Activated B cell treated with CpG ODN at 0.5 μM for 24 hours (primary cell): ENCODE measurements at regions of chr9 and their contacts with region 1.

Region 1: DNA sequence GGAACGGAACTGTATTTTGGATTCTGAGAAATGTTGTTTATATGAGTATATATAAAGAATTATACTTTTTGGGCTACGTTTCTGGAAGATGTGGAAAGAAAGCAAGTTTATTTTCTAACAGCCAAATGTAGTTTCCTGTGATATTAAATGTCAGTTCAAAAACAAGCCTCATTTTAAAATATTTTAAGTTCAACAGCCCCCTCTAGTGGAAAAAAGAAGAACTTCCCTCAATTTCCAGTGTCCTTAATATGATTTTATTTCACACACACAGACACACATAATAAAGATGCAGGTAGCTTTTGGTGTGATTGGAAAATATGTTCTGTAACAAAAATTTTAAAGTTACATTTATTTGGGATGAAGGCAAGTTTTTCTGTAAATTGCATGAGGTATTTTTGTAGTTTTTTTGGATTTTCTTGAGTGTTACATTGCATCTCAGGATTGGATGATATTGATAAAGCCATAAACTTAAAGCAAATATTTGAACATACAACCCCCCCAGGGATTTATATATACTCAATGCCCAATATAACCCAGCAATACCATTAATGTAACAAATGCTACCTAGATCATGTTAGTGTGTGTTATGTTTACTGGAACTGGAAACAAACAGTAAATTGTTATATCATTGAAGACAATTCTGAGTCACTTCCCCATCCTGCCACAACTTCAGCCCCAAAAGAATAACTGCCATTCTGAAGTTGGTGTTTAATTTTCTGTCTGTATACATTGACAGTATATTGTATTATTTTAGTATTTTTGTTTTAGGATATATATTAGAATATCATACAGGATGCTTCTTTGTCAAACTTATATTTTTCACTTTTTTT is 54.0 kb downstream of the CCDC171 start:
- DNase-seq: no peak
- ATAC-seq: no peak
- H3K4me3 Mint-ChIP-seq: no peak overlapping the region
- H3K27ac Mint-ChIP-seq: no peak overlapping the region
- H3K4me1 Mint-ChIP-seq: no peaks in the 10 kb centered on the region
- H3K27me3 Mint-ChIP-seq: no peaks in the 10 kb centered on the region
- CTCF ChIP-seq: peak; percentile 66

Region 2: GRCh38 chr9:15104826-15105420 is 501.9 kb before region 1 on chr9:
- CTCF ChIA-PET with region 1: interaction called, 3 read pairs
- POLR2A ChIA-PET with region 1: no interaction called
- intact Hi-C with region 1: loop called (anchors 2 kb)
- DNase-seq: no peak
- ATAC-seq: no peak
- H3K4me3 Mint-ChIP-seq: no peak overlapping the region
- H3K27ac Mint-ChIP-seq: no peak overlapping the region
- H3K4me1 Mint-ChIP-seq: no peaks in the 10 kb centered on the region
- H3K27me3 Mint-ChIP-seq: peaks cover 9% of the 10 kb centered on the region
- CTCF ChIP-seq: no peak

Region 3: GRCh38 chr9:15180124-15180523 is 426.7 kb before region 1 on chr9:
- CTCF ChIA-PET with region 1: no interaction called
- POLR2A ChIA-PET with region 1: no interaction called
- intact Hi-C with region 1: no loop called
- DNase-seq: no peak
- ATAC-seq: no peak
- H3K4me3 Mint-ChIP-seq: no peak overlapping the region
- H3K27ac Mint-ChIP-seq: no peak overlapping the region
- H3K4me1 Mint-ChIP-seq: peaks cover 7% of the 10 kb centered on the region
- H3K27me3 Mint-ChIP-seq: no peaks in the 10 kb centered on the region
- CTCF ChIP-seq: no peak

Region 4: GRCh38 chr9:15277400-15278090 is 329.3 kb before region 1 on chr9:
- CTCF ChIA-PET with region 1: interaction called, 7 read pairs
- POLR2A ChIA-PET with region 1: no interaction called
- intact Hi-C with region 1: loop called (anchors 1 kb)
- DNase-seq: no peak
- ATAC-seq: peak; percentile 60
- H3K4me3 Mint-ChIP-seq: no peak overlapping the region
- H3K27ac Mint-ChIP-seq: no peak overlapping the region
- H3K4me1 Mint-ChIP-seq: peaks cover 4% of the 10 kb centered on the region
- H3K27me3 Mint-ChIP-seq: no peaks in the 10 kb centered on the region
- CTCF ChIP-seq: no peak

Region 5: GRCh38 chr9:15317836-15318235 is 289.0 kb before region 1 on chr9:
- CTCF ChIA-PET with region 1: no interaction called
- POLR2A ChIA-PET with region 1: no interaction called
- intact Hi-C with region 1: no loop called
- DNase-seq: no peak
- ATAC-seq: no peak
- H3K4me3 Mint-ChIP-seq: no peak overlapping the region
- H3K27ac Mint-ChIP-seq: no peak overlapping the region
- H3K4me1 Mint-ChIP-seq: no peaks in the 10 kb centered on the region
- H3K27me3 Mint-ChIP-seq: no peaks in the 10 kb centered on the region
- CTCF ChIP-seq: no peak

Region 6: GRCh38 chr9:15485836-15486666 is 120.8 kb before region 1 on chr9:
- CTCF ChIA-PET with region 1: no interaction called
- POLR2A ChIA-PET with region 1: no interaction called
- intact Hi-C with region 1: loop called (anchors 1 kb)
- DNase-seq: no peak
- ATAC-seq: no peak
- H3K4me3 Mint-ChIP-seq: no peak overlapping the region
- H3K27ac Mint-ChIP-seq: no peak overlapping the region
- H3K4me1 Mint-ChIP-seq: peaks cover 18% of the 10 kb centered on the region
- H3K27me3 Mint-ChIP-seq: no peaks in the 10 kb centered on the region
- CTCF ChIP-seq: no peak

Region 7: DNA sequence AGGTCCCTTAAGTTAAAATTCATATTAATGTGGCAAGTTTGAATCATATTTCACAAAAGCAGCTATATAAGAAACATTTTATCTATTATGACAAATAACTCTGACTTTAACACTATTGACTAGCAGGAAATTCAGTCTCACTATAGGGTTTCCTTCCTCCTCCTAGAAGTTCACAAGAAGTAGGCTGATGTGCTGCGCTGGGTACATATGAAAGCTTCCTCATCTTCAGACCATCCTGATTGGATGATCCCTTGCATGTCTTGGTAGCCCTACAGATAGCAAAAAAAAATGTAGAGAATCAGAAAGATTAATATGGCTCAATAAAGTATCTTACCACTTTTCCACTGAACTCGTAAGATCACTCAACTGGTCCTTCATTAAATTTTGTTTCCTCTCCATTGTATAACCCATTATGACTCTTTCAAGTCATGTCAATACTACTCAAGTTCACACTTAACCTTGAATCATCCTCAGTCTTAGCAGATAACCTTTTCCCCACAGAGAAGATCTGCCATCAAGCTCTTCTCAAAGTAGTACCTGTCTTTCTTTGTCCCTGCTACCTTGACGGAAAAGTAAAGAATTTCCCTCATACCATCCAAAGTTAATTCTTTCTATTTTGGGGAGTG is 84.6 kb before region 1 on chr9:
- CTCF ChIA-PET with region 1: no interaction called
- POLR2A ChIA-PET with region 1: no interaction called
- intact Hi-C with region 1: no loop called
- DNase-seq: no peak
- ATAC-seq: no peak
- H3K4me3 Mint-ChIP-seq: no peak overlapping the region
- H3K27ac Mint-ChIP-seq: no peak overlapping the region
- H3K4me1 Mint-ChIP-seq: no peaks in the 10 kb centered on the region
- H3K27me3 Mint-ChIP-seq: peaks cover 7% of the 10 kb centered on the region
- CTCF ChIP-seq: no peak

Region 8: GRCh38 chr9:15552636-15553527 is 54.0 kb before region 1 on chr9 and contains the start of gene CCDC171:
- CTCF ChIA-PET with region 1: interaction called, 8 read pairs
- POLR2A ChIA-PET with region 1: no interaction called
- intact Hi-C with region 1: loop called (anchors 1 kb)
- DNase-seq: peak; percentile 76
- ATAC-seq: peak; percentile 85
- H3K4me3 Mint-ChIP-seq: peak within 1 kb of the TSS; percentile 96
- H3K27ac Mint-ChIP-seq: peak within 1 kb of the TSS; percentile 82
- H3K4me1 Mint-ChIP-seq: peaks cover 19% of the 10 kb centered on the region
- H3K27me3 Mint-ChIP-seq: no peaks in the 10 kb centered on the region
- CTCF ChIP-seq: no peak
- total RNA-seq, gene CCDC171: 1.9 and 3.6 TPM in 2 replicates